ENCODE measurements at regions of chr19 and their contacts with region 1.

Region 1: DNA sequence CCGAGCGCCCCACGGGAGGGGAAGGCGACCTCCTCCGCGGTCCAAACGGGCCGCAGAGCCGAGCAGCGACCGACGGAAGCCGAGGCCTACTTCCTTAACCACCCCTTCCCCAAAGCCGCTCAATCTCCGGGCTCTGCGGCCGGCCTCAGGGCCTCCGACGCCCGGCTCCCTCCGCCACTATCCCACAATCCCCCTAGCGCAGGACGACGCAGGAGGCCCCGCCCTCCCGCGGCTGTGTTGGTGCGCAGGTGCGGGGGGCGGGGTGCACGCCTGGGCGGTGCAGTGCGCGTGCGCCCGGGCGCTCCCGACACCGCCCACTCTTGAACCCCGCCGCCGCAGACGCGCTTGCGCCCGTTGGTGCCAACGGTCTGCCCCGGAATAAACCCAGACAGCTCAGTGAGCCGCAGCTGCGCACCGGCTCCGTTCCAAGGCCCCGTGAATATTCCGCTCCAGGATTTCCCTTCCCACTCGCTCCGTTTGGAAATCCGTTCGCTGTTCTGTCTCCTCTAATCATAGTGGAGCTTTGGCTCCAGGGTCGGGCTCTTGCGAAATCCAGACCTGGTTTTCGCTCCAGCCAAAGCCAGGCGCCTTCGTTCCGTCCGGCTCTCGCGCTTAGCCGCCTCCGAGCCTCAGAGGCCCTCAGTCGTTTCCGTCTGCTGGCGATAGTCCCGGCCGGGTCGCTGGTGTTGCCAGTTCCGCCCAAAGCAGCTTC is at the start of gene PPP6R1:
- DNase-seq: peak; percentile 96
- ATAC-seq: peak; percentile 79
- H3K4me3 Mint-ChIP-seq: peak within 1 kb of the TSS; percentile 96
- H3K27ac Mint-ChIP-seq: peak within 1 kb of the TSS; percentile 99
- H3K4me1 Mint-ChIP-seq: peaks cover 10% of the 10 kb centered on the region
- H3K27me3 Mint-ChIP-seq: no peaks in the 10 kb centered on the region
- CTCF ChIP-seq: no peak
- total RNA-seq, gene PPP6R1: 197 to 207 TPM

Region 2: GRCh38 chr19:55270172-55270942 is 11.4 kb after region 1 on chr19:
- CTCF ChIA-PET with region 1: no interaction called
- POLR2A ChIA-PET with region 1: interaction called, 13 read pairs
- intact Hi-C with region 1: no loop called
- DNase-seq: no peak
- ATAC-seq: no peak
- H3K4me3 Mint-ChIP-seq: no peak overlapping the region
- H3K27ac Mint-ChIP-seq: no peak overlapping the region
- H3K4me1 Mint-ChIP-seq: peaks cover 4% of the 10 kb centered on the region
- H3K27me3 Mint-ChIP-seq: no peaks in the 10 kb centered on the region
- CTCF ChIP-seq: no peak

Region 3: DNA sequence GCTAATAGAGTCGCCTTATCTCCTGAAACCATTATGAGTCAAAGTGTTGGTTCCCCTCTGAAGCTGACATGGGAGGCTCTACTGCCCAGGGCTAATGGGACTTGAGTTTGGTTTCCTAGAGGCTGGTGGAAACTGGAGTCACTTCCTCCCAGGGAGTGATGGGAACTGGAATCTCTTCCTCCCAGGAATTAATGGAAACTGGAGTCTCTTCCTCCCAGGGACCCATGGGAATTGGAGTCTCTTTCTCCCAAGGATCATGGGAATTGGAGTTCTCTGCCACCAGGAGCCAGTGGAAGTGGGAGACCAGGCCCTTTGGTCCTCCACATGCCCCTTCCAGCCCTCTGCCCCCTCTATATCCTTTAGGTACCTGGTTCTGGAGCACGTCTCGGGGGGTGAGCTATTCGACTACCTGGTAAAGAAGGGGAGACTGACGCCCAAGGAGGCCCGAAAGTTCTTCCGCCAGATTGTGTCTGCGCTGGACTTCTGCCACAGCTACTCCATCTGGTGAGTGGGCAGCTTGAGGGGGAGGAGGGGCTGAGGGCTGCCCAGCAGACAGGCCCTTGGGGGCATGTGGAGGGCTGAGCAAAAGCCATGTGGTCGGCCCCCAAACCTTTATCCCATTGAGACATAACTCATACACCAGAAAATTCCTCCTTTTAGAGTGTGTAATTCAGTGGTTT is 30.3 kb after region 1 on chr19:
- CTCF ChIA-PET with region 1: interaction called, 11 read pairs
- POLR2A ChIA-PET with region 1: interaction called, 4 read pairs
- intact Hi-C with region 1: no loop called
- DNase-seq: no peak
- ATAC-seq: no peak
- H3K4me3 Mint-ChIP-seq: no peak overlapping the region
- H3K27ac Mint-ChIP-seq: no peak overlapping the region
- H3K4me1 Mint-ChIP-seq: no peaks in the 10 kb centered on the region
- H3K27me3 Mint-ChIP-seq: no peaks in the 10 kb centered on the region
- CTCF ChIP-seq: no peak

Region 4: DNA sequence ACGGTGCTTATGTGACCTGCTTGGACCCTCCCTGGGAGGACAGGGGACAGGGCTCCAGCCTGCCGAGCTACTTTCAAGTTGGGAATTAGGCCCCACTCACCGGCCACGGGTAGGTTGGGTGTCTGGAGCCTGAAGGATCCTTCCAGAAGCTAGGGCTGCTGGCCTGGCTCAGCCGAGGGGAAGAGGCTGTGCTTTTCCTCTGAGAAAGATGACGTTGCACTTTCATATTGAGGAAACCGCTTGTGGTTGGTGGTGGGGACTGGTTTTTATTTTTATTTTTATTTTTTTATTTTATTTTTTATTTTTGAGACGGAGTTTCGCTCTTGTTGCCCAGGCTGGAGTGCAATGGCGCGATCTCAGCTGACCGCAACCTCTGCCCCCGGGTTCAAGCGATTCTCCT is 66.2 kb after region 1 on chr19 and contains the start of gene TMEM150B:
- CTCF ChIA-PET with region 1: no interaction called
- POLR2A ChIA-PET with region 1: no interaction called
- intact Hi-C with region 1: no loop called
- DNase-seq: no peak
- ATAC-seq: no peak
- H3K4me3 Mint-ChIP-seq: no peak within 1 kb of the TSS
- H3K27ac Mint-ChIP-seq: no peak within 1 kb of the TSS
- H3K4me1 Mint-ChIP-seq: no peaks in the 10 kb centered on the region
- H3K27me3 Mint-ChIP-seq: peaks cover 8% of the 10 kb centered on the region
- CTCF ChIP-seq: no peak
- total RNA-seq, gene TMEM150B: not detected

Region 5: DNA sequence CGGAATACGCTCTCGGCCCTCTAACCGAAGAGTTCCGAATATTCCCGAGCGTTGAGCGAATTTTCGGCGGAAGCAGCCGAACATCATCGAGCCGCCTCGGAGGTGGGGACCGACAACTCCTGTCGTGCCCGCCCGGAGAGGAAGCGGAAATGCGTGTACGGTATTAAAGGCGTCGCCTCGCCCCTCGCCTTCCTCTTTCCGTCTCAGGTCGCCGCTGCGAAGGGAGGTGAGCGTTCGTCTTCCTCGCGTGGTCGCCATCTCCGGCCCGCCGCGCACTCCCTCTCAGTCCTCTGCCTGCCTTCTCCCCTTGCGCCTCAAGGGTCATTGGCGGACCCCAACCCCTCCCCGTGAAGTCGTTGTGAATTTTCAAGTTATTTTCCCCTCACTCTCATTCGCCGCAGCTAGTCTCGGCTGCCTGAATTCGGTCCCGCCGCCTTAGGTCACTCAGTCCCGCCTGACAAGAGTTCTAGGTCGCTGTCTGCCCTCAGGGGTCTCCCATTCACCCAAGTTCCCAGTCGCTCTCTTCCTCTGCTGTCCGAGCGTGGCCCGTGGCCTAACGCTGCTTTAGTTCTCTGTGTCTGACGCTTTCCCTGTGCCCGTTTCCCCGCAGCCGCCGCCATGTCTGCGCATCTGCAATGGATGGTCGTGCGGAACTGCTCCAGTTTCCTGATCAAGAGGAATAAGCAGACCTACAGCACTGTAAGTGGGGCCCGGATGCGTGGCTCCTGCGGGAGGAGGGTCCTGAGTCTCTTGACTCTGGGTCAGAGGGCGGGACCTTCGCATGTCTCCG is 127.0 kb after region 1 on chr19 and contains the start of gene RPL28:
- CTCF ChIA-PET with region 1: interaction called, 10 read pairs
- POLR2A ChIA-PET with region 1: interaction called, 40 read pairs
- intact Hi-C with region 1: loop called (anchors 5 kb)
- DNase-seq: peak; percentile 98
- ATAC-seq: peak; percentile 84
- H3K4me3 Mint-ChIP-seq: peak within 1 kb of the TSS; percentile 99
- H3K27ac Mint-ChIP-seq: peak within 1 kb of the TSS; percentile 99
- H3K4me1 Mint-ChIP-seq: peaks cover 53% of the 10 kb centered on the region
- H3K27me3 Mint-ChIP-seq: no peaks in the 10 kb centered on the region
- CTCF ChIP-seq: no peak
- total RNA-seq, gene RPL28: 3,001 to 3,058 TPM

Region 6: DNA sequence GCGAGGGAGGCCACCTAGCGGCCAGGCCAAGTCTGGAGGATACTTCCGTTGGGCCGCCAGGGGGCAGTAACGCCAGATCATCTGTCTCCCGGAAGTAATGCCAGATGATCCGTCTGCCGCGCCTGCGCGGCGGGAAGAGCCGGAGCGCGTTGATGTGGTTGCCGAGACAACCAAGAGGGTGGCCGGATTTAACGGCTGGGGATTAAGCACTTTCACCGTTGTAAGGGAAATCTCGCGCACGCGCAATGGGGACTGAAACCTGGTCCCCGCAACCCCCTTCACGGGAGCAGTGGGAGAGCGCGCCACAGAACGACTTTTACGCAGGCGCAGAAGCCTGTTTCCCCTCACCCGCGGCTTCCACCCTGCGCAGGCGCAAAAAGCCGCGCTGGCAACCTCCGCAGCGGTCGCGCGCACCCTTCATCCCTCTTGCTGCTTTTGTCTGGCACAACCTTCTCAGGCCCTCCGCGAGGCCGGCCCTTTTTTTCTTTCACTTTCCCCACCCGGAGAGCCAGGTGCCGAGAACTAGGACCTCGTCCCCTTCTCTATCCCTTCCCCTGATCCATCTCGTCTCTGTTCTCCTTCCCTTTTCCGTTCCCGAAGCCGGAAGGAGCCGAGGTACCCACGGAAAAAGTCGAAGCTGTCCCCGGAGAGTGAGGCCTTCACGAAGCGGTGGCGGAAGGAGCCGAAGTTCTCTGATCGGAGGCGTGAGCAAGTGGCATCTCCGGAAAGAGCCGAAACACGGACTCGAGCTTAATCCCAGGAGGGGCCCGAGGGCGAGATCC is 395.0 kb after region 1 on chr19:
- CTCF ChIA-PET with region 1: interaction called, 3 read pairs
- POLR2A ChIA-PET with region 1: no interaction called
- intact Hi-C with region 1: loop called (anchors 10 kb)
- DNase-seq: peak; percentile 100
- ATAC-seq: peak; percentile 81
- H3K4me3 Mint-ChIP-seq: peak overlapping the region; percentile 98
- H3K27ac Mint-ChIP-seq: peak overlapping the region; percentile 99
- H3K4me1 Mint-ChIP-seq: peaks cover 41% of the 10 kb centered on the region
- H3K27me3 Mint-ChIP-seq: no peaks in the 10 kb centered on the region
- CTCF ChIP-seq: peak; percentile 99

Measured in activated CD8-positive, alpha-beta T cell treated with anti-CD3 and anti-CD28 coated beads for 36 hours (primary cell).